ENCODE measurements at regions of chr7 and their contacts with region 1.

Region 1: GRCh38 chr7:74334030-74334429 is 44.8 kb downstream of the CLIP2 start:
- DNase-seq: no peak
- H3K4me3 ChIP-seq: no peak overlapping the region
- H3K27ac ChIP-seq: no peak overlapping the region
- H3K4me1 ChIP-seq: no peaks in the 10 kb centered on the region
- H3K27me3 ChIP-seq: no peaks in the 10 kb centered on the region
- CTCF ChIP-seq: no peak

Region 2: GRCh38 chr7:74164985-74165456 is 169.0 kb before region 1 on chr7:
- intact Hi-C with region 1: no loop called
- DNase-seq: no peak
- H3K4me3 ChIP-seq: no peak overlapping the region
- H3K27ac ChIP-seq: no peak overlapping the region
- H3K4me1 ChIP-seq: no peaks in the 10 kb centered on the region
- H3K27me3 ChIP-seq: no peaks in the 10 kb centered on the region
- CTCF ChIP-seq: peak; percentile 6 to 30 (median 30)

Region 3: DNA sequence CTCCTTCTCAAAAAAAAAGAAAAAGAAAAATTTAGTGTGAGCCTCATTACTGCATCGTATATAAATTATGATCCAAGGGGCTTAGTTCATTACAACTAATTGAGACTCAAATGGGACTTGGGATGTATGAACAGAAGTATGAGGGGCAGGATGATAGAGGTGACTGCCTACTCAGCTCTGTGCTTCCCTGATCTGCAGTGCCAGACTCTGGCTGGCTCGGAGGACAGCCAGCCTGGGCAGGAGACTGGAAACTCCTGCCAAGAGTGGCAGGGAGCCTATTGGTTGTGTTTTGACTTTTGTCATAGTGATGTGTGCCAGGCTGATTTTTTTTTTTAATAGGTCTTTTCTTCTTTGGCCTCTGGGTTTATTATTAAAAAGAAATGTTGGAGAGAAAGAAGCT is 45.9 kb after region 1 on chr7:
- intact Hi-C with region 1: loop called (anchors 5 kb)
- DNase-seq: peak in 1 of 2 donors; percentile 77
- H3K4me3 ChIP-seq: no peak overlapping the region
- H3K27ac ChIP-seq: peak overlapping the region; percentile 45 to 68
- H3K4me1 ChIP-seq: no peaks in the 10 kb centered on the region
- H3K27me3 ChIP-seq: no peaks in the 10 kb centered on the region
- CTCF ChIP-seq: no peak

Measured in ascending aorta (tissue), 2 donors.